Caco-2 (cell line): ENCODE measurements at regions of chr7 and their contacts with region 1.

Region 1: GRCh38 chr7:108002726-108003598 is at the start of gene LAMB1:
- DNase-seq: peak; percentile 93 to 94
- H3K4me3 ChIP-seq: peak within 1 kb of the TSS; percentile 94
- H3K4me3 Mint-ChIP-seq: peak within 1 kb of the TSS; percentile 79
- H3K27ac Mint-ChIP-seq: peak within 1 kb of the TSS; percentile 83
- H3K4me1 ChIP-seq: peaks cover 70% of the 10 kb centered on the region
- H3K4me1 Mint-ChIP-seq: peaks cover 38% of the 10 kb centered on the region
- H3K27me3 ChIP-seq: no peaks in the 10 kb centered on the region
- H3K27me3 Mint-ChIP-seq: no peaks in the 10 kb centered on the region
- CTCF ChIP-seq: no peak
- total RNA-seq, gene LAMB1: 418 and 431 TPM in 2 replicates

Region 2: DNA sequence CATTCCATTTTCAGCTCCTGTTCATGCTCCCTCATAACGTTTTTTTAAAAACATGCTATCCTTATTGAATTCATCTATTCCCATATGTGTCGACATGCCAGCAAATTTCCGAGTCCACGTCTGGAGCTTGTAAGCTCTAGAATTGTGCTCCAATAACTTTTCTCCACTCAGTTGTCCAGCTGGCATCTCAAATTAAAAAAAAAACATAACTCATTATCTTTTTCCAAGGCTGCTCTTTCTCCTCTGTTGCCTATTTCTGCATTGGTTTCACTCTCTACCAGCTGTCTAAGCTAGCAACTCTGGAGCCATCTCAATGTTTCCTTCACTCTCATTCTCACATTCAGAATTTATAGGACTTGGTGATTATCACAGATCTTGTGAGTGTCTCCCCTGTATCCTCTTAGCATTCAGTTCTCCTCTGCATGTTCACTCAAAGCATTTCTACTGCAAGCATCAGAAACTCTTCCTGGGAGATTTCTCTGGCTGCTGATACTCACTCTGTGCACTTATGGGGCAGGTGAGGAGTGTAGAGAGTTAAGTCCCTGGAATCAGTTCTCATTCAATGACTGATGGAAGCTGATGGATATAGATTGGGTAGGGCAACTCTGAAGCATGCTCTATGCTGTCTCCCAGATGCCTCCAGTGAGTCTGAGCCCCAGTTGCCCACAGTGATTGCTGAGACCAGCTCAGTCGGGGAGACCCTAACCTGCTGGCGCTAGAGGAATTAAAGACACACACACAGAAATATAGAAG is 118.7 kb before region 1 on chr7:
- CTCF ChIA-PET with region 1: no interaction called
- POLR2A ChIA-PET with region 1: no interaction called
- intact Hi-C with region 1: no loop called
- DNase-seq: no peak
- H3K4me3 ChIP-seq: no peak overlapping the region
- H3K4me3 Mint-ChIP-seq: no peak overlapping the region
- H3K27ac Mint-ChIP-seq: no peak overlapping the region
- H3K4me1 ChIP-seq: no peaks in the 10 kb centered on the region
- H3K4me1 Mint-ChIP-seq: peaks cover 14% of the 10 kb centered on the region
- H3K27me3 ChIP-seq: no peaks in the 10 kb centered on the region
- H3K27me3 Mint-ChIP-seq: peaks cover 4% of the 10 kb centered on the region
- CTCF ChIP-seq: no peak

Region 3: GRCh38 chr7:107972941-107973376 is 30.0 kb before region 1 on chr7:
- CTCF ChIA-PET with region 1: no interaction called
- POLR2A ChIA-PET with region 1: no interaction called
- intact Hi-C with region 1: no loop called
- DNase-seq: no peak
- H3K4me3 ChIP-seq: no peak overlapping the region
- H3K4me3 Mint-ChIP-seq: no peak overlapping the region
- H3K27ac Mint-ChIP-seq: no peak overlapping the region
- H3K4me1 ChIP-seq: peaks cover 41% of the 10 kb centered on the region
- H3K4me1 Mint-ChIP-seq: no peaks in the 10 kb centered on the region
- H3K27me3 ChIP-seq: no peaks in the 10 kb centered on the region
- H3K27me3 Mint-ChIP-seq: no peaks in the 10 kb centered on the region
- CTCF ChIP-seq: no peak

Region 4: DNA sequence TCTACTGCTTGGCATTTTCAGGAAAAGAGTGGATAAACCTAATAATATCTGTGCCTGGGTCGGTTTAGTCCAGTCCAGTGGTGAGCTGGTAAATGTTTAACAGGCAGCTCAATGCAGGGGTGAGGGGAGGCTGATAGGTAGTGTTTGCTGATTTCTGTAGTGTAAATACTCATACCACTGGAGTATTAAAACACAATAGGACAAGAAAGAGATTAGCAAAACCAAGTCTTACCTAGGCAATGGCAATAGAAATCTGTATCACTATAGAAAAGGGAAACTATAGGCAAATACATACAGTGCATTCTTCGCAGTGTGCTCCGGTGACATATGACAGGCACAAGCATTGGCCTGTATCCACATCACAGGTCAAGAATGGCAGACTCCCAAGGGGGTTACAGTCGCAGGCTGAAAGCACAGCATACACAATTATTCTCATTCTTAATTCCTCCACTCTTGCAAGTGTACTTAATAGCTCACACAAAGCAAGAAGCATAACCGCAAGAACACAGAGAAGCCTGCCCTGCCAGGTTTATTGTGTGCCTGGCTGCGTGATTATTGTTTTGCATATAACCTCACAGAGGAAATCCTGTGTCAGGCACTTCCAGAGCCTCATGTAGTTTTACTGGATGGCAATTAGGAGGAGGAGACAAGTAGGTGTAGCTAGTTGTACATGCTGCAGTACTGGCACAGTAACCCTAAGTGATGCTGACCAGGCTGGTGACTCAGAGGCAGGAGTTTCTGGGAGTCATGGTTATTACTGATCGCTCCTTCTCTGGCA is 92.2 kb after region 1 on chr7:
- CTCF ChIA-PET with region 1: interaction called, 3 read pairs
- POLR2A ChIA-PET with region 1: interaction called, 3 read pairs
- intact Hi-C with region 1: loop called (anchors 2 kb)
- DNase-seq: peak; percentile 86 to 89
- H3K4me3 ChIP-seq: no peak overlapping the region
- H3K4me3 Mint-ChIP-seq: peak overlapping the region; percentile 62
- H3K27ac Mint-ChIP-seq: peak overlapping the region; percentile 63
- H3K4me1 ChIP-seq: peaks cover 76% of the 10 kb centered on the region
- H3K4me1 Mint-ChIP-seq: peaks cover 54% of the 10 kb centered on the region
- H3K27me3 ChIP-seq: no peaks in the 10 kb centered on the region
- H3K27me3 Mint-ChIP-seq: no peaks in the 10 kb centered on the region
- CTCF ChIP-seq: no peak

Region 5: DNA sequence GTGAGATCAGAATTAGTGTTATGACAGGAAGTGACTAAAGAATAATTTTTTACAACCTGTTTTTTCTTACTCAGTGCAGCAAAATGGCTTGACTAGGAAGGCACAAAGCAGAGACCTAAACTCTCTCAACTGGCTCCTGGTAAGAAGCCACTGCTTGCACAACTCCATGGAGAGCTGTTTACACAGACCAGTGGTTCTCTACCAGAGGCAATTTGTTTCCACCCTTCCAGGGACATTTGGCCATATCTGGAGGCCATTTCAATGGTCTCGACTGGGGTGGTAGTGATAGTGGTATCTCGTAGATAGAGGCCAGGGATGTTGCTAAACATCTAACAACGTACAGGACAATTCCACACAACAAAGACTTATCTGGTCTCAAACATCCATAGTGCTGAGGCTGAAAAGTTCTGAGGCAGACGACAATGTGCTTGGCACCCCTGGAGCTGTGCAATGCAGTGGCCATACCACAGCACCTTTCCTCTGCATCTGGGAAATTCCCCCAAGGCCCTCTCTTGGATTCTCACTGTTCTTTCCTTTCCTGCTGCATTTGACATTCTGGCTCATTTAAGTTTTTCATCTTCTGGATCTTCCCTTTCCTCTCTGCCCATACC is 232.6 kb after region 1 on chr7:
- CTCF ChIA-PET with region 1: no interaction called
- POLR2A ChIA-PET with region 1: no interaction called
- intact Hi-C with region 1: loop called (anchors 5 kb)
- DNase-seq: peak; percentile 78 to 89
- H3K4me3 ChIP-seq: no peak overlapping the region
- H3K4me3 Mint-ChIP-seq: peak overlapping the region; percentile 40
- H3K27ac Mint-ChIP-seq: peak overlapping the region; percentile 81
- H3K4me1 ChIP-seq: peaks cover 59% of the 10 kb centered on the region
- H3K4me1 Mint-ChIP-seq: peaks cover 39% of the 10 kb centered on the region
- H3K27me3 ChIP-seq: no peaks in the 10 kb centered on the region
- H3K27me3 Mint-ChIP-seq: no peaks in the 10 kb centered on the region
- CTCF ChIP-seq: no peak